ENCODE measurements at regions of chr16 and their contacts with region 1.

Region 1: GRCh38 chr16:3264137-3265036 is 8.0 kb upstream of the MEFV start:
- DNase-seq: peak; percentile 95
- H3K4me3 Mint-ChIP-seq: peak overlapping the region; percentile 89
- H3K27ac Mint-ChIP-seq: peak overlapping the region; percentile 92
- H3K4me1 Mint-ChIP-seq: peaks cover 20% of the 10 kb centered on the region
- H3K27me3 Mint-ChIP-seq: no peaks in the 10 kb centered on the region

Region 2: GRCh38 chr16:3023669-3024478 is 240.5 kb before region 1 on chr16 and contains the starts of genes HCFC1R1 and THOC6:
- intact Hi-C with region 1: loop called (anchors 1 kb)
- DNase-seq: peak; percentile 94
- H3K4me3 Mint-ChIP-seq: peak within 1 kb of the TSS; percentile 84
- H3K27ac Mint-ChIP-seq: peak within 1 kb of the TSS; percentile 91
- H3K4me1 Mint-ChIP-seq: peaks cover 36% of the 10 kb centered on the region
- H3K27me3 Mint-ChIP-seq: peaks cover 1% of the 10 kb centered on the region
- total RNA-seq, gene HCFC1R1: 30.0 and 30.9 TPM in 2 replicates
- total RNA-seq, gene THOC6: 48.3 and 49.0 TPM in 2 replicates

Region 3: DNA sequence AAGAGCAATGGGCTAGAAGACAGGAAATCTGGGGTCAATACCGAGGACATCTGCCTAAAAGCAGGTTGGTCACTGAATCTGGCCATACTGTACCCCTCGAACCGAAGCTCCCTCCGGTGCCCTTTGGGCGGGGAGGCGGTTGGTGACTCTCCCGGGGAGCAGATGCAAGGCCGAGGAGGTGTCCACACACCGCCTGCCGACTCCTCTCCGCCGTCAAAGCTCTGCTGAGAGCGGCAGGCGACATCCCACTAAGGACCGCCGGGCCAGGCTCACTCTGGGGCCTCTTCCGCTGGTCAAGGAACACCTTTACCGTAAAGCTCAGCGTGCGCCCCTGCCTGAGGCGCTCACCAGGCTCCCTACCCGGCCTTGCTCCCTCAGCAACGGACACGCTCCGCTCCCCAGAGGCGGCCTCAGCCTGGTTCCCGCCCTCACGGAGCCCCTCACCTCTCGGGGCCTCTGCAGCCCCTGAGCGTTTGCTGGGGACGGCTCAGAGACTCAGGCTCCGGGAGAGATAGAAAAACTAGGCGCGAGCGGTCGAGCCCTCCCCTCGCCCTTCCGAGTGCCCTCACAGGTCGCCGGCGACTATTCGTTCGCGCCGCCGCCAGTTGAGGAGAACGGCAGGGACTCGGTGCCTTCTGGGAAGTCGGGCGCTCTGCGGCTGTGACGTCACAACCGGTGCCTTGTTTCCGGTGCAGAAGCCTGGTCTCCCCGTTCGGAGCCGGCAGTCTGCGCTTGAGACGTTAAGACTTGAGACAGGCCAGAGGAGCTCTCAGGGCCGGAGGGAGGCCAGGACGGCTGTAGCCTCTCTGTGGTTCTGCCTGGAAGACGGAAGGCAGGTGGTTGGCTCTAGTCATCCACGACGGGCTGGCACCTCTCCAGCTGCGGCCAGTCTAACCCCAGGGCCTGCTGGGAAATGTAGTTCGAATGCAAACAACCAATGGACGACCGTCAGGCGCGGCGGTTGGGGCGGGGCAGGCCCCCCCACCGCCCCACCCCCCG is 29.5 kb before region 1 on chr16 and contains the start of gene ZNF200:
- intact Hi-C with region 1: loop called (anchors 1 kb)
- DNase-seq: peak; percentile 91
- H3K4me3 Mint-ChIP-seq: peak within 1 kb of the TSS; percentile 94
- H3K27ac Mint-ChIP-seq: peak within 1 kb of the TSS; percentile 94
- H3K4me1 Mint-ChIP-seq: peaks cover 15% of the 10 kb centered on the region
- H3K27me3 Mint-ChIP-seq: no peaks in the 10 kb centered on the region
- total RNA-seq, gene ZNF200: 13.6 and 15.8 TPM in 2 replicates

Region 4: GRCh38 chr16:3292604-3293003 is 28.2 kb after region 1 on chr16:
- intact Hi-C with region 1: no loop called
- DNase-seq: no peak
- H3K4me3 Mint-ChIP-seq: no peak overlapping the region
- H3K27ac Mint-ChIP-seq: no peak overlapping the region
- H3K4me1 Mint-ChIP-seq: no peaks in the 10 kb centered on the region
- H3K27me3 Mint-ChIP-seq: no peaks in the 10 kb centered on the region

Region 5: DNA sequence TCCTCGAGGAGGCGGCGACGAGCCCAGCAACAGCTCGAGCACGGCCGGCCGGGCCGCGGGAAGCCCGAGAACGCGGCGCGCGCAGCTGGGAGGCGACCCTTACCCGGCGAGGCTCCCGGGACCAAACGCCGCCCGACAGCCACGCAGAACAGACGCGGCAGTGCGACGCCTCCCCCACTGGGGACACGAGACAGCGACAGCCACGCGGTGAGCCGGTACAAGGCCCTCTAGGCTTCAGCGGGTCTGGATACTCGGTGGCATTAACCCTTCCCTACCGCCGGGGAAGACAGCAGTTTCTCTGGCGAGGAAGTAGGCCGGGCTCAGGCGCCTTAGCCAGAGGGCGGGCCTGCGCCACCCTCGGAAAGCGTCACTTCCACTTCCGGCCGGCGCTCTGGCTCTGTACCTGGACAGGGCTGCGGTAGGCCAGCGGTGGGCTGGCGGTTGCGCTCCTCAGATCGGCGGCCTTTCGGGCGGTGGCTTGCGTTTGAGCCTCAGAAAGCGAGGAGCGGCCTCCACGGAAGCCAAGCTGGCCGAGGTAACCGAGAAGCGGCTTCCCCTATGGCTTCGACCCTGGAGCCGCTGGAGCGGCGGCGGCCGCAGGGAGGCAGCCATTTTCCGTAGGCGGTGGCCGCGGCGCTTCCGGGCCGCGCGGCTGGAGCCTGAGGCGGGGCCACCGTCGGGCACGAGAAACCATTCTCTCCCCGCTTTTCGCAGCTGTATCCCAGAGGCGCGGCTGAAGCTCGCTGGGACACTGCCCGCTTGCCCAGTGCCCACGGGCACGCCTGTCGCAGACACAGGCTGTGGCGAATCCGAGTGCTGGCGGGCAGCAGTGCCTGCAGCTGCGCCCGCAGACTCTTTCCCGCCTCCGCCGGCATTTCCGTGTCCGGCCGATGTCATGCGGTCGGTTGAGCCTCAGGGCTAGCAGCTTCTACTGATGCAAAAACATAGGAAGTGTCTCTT is 41.0 kb after region 1 on chr16 and contains the starts of genes TIGD7 and ZNF75A:
- intact Hi-C with region 1: loop called (anchors 1 kb)
- DNase-seq: peak; percentile 79
- H3K4me3 Mint-ChIP-seq: peak within 1 kb of the TSS; percentile 75
- H3K27ac Mint-ChIP-seq: peak within 1 kb of the TSS; percentile 70
- H3K4me1 Mint-ChIP-seq: peaks cover 8% of the 10 kb centered on the region
- H3K27me3 Mint-ChIP-seq: no peaks in the 10 kb centered on the region
- total RNA-seq, gene TIGD7: 2.0 and 3.1 TPM in 2 replicates
- total RNA-seq, gene ZNF75A: 26.5 and 27.6 TPM in 2 replicates

Region 6: GRCh38 chr16:3457434-3458252 is 193.3 kb after region 1 on chr16:
- intact Hi-C with region 1: loop called (anchors 1 kb)
- DNase-seq: peak; percentile 88
- H3K4me3 Mint-ChIP-seq: peak overlapping the region; percentile 83
- H3K27ac Mint-ChIP-seq: peak overlapping the region; percentile 77
- H3K4me1 Mint-ChIP-seq: peaks cover 42% of the 10 kb centered on the region
- H3K27me3 Mint-ChIP-seq: no peaks in the 10 kb centered on the region

Region 7: DNA sequence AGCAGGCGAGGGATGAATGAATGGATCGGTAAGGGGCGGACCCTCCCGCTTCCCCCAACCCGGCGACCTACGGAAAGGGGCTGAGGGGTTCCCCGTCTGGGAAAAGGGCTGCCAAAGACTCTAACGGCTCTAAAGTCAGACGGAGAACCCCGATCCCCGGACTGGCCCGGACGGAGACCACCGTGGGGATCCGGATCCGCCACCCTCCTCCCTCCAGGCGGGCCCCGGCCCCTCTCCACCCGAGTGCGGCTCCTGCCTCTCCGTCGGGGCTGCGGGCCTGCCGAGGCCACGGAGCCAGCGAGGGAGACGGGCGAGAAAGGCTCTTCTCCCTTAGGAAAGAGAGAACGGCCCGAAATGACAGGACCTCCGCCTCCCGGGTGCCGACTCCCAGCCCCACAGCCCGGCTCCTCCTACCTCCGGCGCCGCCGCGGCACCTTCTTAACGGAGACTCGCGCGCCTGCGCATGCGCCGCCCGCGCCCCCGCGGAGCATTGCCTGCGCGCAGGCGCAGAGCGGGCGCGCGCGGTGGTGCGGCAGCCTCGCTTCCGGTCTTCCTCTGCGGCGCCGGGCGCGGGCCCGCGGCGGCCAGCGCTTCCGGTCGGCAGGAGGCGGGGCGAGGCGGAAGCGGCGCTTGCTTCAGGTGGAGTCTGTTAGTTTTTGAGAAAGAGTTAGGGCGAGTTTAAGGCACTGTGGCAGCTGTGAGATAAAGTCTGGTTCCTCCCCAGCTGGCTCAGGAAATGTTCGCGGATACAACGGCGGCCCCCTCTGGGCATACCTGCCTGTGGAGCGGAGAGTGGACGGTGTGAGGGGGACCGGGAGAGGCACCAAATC is 347.0 kb after region 1 on chr16 and contains the start of gene SLX4:
- intact Hi-C with region 1: loop called (anchors 10 kb)
- DNase-seq: peak; percentile 93
- H3K4me3 Mint-ChIP-seq: peak within 1 kb of the TSS; percentile 98
- H3K27ac Mint-ChIP-seq: peak within 1 kb of the TSS; percentile 97
- H3K4me1 Mint-ChIP-seq: peaks cover 52% of the 10 kb centered on the region
- H3K27me3 Mint-ChIP-seq: no peaks in the 10 kb centered on the region
- total RNA-seq, gene SLX4: 10.3 and 10.8 TPM in 2 replicates

Measured in activated T-helper 1 cell treated with anti-CD3 and anti-CD28 coated beads, Interleukin-12 subunit alpha, Interleukin-12 subunit beta, Interleukin-2, Interleukin-4 antibody, amounts not matched to agents 30 ng/mL and 10 ng/mL and 1 ng/mL, durations not matched to agents 14 hours and 24 hours and 36 hours (primary cell).